ENCODE measurements at regions of chr16 and their contacts with region 1.

Region 1: GRCh38 chr16:30698139-30698815 is 694 bp upstream of the SRCAP start:
- DNase-seq: peak; percentile 94 to 99
- H3K4me3 ChIP-seq: peak overlapping the region; percentile 89 to 90
- H3K27ac ChIP-seq: peak overlapping the region; percentile 97 to 100
- H3K4me1 ChIP-seq: peaks cover 8 to 16% of the 10 kb centered on the region in 2 donors
- H3K27me3 ChIP-seq: no peaks in the 10 kb centered on the region
- CTCF ChIP-seq: no peak

Region 2: DNA sequence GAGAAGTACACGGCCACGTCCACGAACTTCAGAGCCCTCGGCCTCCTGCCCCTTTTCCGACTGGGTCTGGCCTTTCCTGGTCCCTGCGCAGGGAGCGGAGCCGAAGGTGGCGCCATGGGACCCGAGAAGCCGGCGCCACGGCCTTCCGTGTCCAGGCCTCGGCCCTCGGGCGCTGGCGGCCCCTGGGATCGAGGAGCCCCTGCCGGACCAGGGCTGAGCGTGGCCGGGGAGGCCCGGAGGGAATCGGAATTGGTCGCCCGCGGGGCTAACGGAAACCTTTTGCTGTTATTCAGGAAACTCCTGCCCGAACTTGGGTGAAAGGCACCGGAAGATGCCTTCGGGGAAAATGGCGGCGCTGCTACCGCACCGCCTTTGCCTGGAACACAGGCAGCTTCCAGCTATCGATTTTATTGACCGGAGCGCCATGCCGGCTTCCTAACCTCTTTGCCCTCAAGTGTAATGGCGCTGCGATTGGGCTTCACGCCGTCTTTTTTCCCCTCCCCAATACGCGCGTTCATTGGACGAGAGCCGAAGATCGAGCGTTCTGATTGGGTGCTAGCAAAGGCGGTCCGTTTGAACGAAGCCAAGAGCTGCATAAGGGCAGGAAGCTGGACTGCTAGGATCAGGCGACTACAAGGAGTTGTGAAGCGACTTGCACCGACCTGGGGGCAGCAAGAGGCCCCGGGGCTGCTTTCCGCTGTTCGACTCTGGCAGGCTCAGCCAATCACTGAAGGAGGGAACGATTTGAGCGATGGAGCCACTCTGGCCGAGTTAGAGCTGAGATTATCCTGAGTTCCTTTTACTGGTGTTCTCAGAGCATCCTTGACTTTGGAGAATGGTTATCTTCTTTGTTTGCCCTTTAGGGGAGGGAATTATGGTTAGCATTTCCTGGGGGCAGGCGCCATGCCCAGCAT is 88.1 kb before region 1 on chr16 and contains the start of gene ZNF689:
- intact Hi-C with region 1: loop called (anchors 1 kb)
- DNase-seq: peak; percentile 73 to 97
- H3K4me3 ChIP-seq: peak within 1 kb of the TSS; percentile 81 to 88
- H3K27ac ChIP-seq: peak within 1 kb of the TSS; percentile 88 to 96
- H3K4me1 ChIP-seq: peaks cover 0 to 10% of the 10 kb centered on the region in 2 donors
- H3K27me3 ChIP-seq: no peaks in the 10 kb centered on the region
- CTCF ChIP-seq: peak in 1 of 3 experiments; percentile 5
- total RNA-seq, gene ZNF689: 7.0 TPM

Region 3: GRCh38 chr16:30747799-30748634 is 49.7 kb after region 1 on chr16 and contains the start of gene PHKG2:
- intact Hi-C with region 1: loop called (anchors 1 kb)
- DNase-seq: peak; percentile 97 to 99
- H3K4me3 ChIP-seq: peak within 1 kb of the TSS; percentile 84 to 99
- H3K27ac ChIP-seq: peak within 1 kb of the TSS; percentile 87
- H3K4me1 ChIP-seq: peaks cover 7 to 8% of the 10 kb centered on the region in 2 donors
- H3K27me3 ChIP-seq: no peaks in the 10 kb centered on the region
- CTCF ChIP-seq: no peak
- total RNA-seq, gene PHKG2: 78.8 TPM

Region 4: DNA sequence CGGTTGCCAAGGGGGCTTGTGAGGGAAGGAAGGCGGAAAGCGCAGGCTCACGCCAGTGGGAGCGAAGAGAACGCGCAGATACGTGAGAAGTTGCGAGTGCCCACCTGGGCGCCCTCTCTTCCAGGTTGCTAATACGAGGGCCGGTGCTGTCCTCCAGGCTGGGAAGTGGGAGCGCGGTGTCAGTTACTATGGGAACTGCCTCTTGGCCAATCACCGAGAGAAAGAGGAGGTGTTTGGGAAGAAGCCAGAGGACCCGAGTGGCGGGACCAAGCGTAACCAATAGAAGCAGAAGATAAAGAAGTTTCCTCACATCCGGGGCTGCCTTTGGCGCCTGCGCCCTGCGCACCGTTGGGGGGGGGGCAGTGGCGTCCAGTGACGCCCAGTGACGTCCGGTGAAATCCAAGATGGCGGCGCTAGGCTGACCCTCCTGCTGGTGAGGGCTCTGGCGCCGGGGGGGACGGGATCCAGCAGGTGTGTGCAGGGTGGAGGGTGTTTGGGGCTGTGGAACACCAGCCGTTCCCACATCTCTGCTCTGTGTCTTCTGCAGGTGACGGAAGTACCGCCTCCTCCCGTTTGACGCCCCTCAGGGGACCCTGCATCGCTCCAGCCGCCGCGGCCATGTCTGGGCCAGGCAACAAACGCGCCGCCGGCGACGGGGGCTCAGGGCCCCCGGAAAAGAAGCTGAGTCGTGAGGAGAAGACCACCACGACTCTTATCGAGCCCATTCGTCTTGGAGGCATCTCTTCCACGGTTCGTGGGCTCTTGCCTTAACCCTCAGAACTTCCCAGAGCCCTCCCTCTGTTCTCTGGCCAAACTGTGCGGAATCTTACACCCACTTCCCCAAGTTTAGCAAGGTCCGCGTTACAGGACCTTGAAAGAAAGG is 63.9 kb after region 1 on chr16 and contains the starts of genes CFAP119 and RNF40:
- intact Hi-C with region 1: loop called (anchors 1 kb)
- DNase-seq: peak; percentile 95 to 98
- H3K4me3 ChIP-seq: peak within 1 kb of the TSS; percentile 85 to 88
- H3K27ac ChIP-seq: peak within 1 kb of the TSS; percentile 89 to 96
- H3K4me1 ChIP-seq: peaks cover 16 to 20% of the 10 kb centered on the region in 2 donors
- H3K27me3 ChIP-seq: no peaks in the 10 kb centered on the region
- CTCF ChIP-seq: no peak
- total RNA-seq, gene CFAP119: not detected
- total RNA-seq, gene RNF40: 66.3 TPM

Region 5: DNA sequence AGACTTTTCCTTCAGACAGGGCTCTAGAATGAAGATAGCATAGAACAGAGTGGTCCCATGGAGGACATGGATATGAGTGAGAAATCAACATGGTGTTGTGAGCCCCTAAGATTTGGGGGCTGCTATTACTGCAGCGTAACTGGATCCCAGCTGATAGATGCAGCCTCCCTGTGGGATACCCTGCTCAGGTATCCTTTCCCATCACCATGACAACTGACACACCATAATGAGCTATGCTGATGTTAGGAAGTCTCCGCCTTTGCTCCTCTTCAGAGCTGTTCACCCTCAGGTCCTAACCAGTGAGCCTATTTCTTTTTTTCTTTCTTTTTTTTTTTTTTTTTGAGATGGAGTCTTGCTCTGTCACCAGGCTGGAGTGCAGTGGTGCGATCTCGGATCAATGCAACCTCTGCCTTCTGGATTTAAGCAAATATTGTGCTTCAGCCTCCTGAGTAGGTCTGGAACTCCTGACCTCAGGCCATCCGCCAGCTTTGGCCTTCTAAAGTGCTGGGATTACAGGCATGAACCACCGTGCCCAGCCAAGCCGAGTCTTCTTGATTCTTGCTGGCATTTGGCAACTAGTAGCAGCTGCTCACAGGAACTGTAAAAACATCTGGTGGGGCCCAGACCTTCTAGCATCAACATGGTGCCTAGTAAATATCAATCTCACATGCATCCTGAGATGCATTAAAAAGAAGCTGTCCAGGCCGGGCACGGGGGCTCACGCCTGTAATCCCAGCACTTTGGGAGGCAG is 352.2 kb after region 1 on chr16:
- intact Hi-C with region 1: no loop called
- DNase-seq: no peak
- H3K4me3 ChIP-seq: no peak overlapping the region
- H3K27ac ChIP-seq: no peak overlapping the region
- H3K4me1 ChIP-seq: no peaks in the 10 kb centered on the region
- H3K27me3 ChIP-seq: no peaks in the 10 kb centered on the region
- CTCF ChIP-seq: no peak